Panc1 (cell line): ENCODE measurements at regions of chr19 and their contacts with region 1.

Region 1: GRCh38 chr19:34712395-34713261 is 21.4 kb upstream of the ZNF181 start:
- DNase-seq: peak; percentile 73
- ATAC-seq: peak; percentile 95
- H3K4me3 ChIP-seq: no peak overlapping the region
- H3K27ac ChIP-seq: no peak overlapping the region
- H3K4me1 ChIP-seq: no peaks in the 10 kb centered on the region
- H3K27me3 ChIP-seq: peaks cover 21% of the 10 kb centered on the region
- CTCF ChIP-seq: peak; percentile 82

Region 2: DNA sequence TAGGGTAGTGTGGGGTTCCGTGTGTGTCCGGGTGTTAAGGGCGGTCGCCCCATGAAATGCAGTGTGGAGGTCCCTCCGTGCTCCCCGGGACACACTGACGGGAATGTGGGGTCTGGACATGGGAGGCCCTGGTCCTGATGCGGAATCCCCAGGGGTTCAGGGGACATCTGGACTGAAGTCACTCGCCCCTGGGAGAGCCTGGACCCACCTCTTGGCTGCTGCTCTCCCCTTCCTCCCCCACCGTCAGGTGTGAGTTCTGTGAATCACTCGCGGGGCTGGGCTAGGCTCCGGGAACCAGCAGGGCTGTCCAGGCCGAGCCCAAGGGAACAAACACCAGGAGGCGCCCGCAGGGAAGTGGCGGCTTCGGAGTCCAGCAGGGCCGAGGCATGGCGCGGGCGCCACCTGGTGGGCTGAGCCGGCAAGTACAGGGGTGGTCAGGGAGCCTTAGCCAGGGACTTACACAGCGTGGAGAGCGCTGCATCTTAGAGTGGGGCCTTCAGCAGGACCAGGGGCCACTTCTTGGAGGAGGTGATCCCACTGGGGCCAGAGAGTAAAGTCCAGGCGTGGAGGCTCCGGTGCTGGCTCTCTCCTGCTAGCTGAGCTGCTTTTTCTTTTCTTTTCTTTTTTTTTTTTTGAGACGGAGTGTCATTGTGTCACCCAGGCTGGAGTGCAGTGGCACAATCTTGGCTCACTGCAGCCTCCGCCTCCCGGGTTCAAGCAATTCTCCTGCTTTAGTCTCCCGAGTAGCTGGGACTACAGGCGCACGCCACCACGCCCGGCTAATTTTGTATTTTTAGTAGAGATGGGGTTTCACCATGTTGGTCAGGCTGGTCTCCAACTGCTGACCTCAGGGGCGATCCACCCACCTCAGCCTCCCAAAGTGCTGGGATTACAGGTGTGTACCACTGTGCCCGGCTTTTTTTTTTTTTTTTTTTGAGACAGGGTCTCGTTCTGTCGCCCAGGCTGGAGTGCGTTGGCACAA is 211.0 kb before region 1 on chr19:
- CTCF ChIA-PET with region 1: interaction called, 3 read pairs
- POLR2A ChIA-PET with region 1: no interaction called
- in situ Hi-C with region 1: no loop called
- intact Hi-C with region 1: loop called (anchors 2 kb)
- DNase-seq: peak; percentile 69
- ATAC-seq: peak; percentile 87
- H3K4me3 ChIP-seq: no peak overlapping the region
- H3K27ac ChIP-seq: peak overlapping the region; percentile 37
- H3K4me1 ChIP-seq: peaks cover 22% of the 10 kb centered on the region
- H3K27me3 ChIP-seq: no peaks in the 10 kb centered on the region
- CTCF ChIP-seq: peak; percentile 100

Region 3: DNA sequence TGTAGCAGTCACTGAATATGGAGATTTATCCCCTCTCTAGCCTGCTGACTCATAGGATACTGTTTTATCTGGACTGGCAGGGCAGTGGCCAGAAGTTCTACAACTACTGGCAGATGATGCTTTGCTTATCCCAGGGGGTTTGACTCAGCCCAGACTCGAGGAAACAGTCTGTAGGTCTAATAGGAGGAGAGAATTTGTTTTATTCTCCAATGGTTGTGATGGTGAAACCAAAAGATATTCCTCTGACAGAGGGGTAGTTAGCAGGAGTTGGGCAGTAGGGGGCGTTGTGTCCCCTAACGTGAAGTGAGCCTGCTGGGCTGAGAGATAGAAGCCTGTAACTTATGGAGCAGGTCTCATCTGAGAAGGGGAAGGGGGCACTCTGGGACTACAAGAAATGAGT is 156.1 kb before region 1 on chr19:
- CTCF ChIA-PET with region 1: no interaction called
- POLR2A ChIA-PET with region 1: no interaction called
- in situ Hi-C with region 1: no loop called
- intact Hi-C with region 1: loop called (anchors 2 kb)
- DNase-seq: no peak
- ATAC-seq: peak; percentile 84
- H3K4me3 ChIP-seq: no peak overlapping the region
- H3K27ac ChIP-seq: no peak overlapping the region
- H3K4me1 ChIP-seq: no peaks in the 10 kb centered on the region
- H3K27me3 ChIP-seq: peaks cover 18% of the 10 kb centered on the region
- CTCF ChIP-seq: peak; percentile 86

Region 4: DNA sequence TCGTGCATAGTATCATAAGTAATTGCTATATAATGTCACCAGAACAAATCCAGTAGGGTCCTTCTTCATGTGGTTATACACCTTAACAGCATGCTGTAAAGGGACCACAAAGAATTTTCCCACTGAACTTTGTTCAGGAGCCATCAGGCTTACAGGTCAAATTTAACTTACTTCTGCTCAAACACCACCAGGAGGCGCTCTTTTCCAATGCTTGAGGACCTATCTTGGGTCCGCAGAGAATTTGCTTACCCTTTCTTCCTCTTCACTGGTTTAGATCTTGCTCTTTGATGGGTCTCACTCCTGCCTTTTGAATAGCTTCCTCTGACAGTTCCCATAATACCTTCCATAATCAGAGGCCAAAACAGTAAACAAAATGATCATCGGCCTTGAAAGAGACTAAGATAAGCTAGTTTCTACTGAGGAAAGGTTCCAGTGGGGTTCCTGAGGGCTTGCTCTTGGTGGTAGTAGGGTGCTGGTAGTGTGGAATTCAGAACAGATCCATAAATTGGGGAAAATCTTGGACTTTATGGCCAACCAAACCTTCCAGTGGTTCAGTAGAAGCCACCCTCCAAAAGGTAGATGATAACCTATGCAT is 73.0 kb before region 1 on chr19:
- CTCF ChIA-PET with region 1: interaction called, 10 read pairs
- POLR2A ChIA-PET with region 1: interaction called, 3 read pairs
- in situ Hi-C with region 1: no loop called
- intact Hi-C with region 1: loop called (anchors 1 kb)
- DNase-seq: peak; percentile 43
- ATAC-seq: peak; percentile 92
- H3K4me3 ChIP-seq: no peak overlapping the region
- H3K27ac ChIP-seq: no peak overlapping the region
- H3K4me1 ChIP-seq: no peaks in the 10 kb centered on the region
- H3K27me3 ChIP-seq: no peaks in the 10 kb centered on the region
- CTCF ChIP-seq: peak; percentile 92

Region 5: GRCh38 chr19:34675250-34675649 is 37.4 kb before region 1 on chr19:
- CTCF ChIA-PET with region 1: no interaction called
- POLR2A ChIA-PET with region 1: interaction called, 11 read pairs
- in situ Hi-C with region 1: no loop called
- intact Hi-C with region 1: no loop called
- DNase-seq: no peak
- ATAC-seq: no peak
- H3K4me3 ChIP-seq: no peak overlapping the region
- H3K27ac ChIP-seq: no peak overlapping the region
- H3K4me1 ChIP-seq: peaks cover 7% of the 10 kb centered on the region; the same call in 1 of the 2 replicates
- H3K27me3 ChIP-seq: no peaks in the 10 kb centered on the region
- CTCF ChIP-seq: no peak

Region 6: GRCh38 chr19:34772697-34773554 is 60.3 kb after region 1 on chr19 and contains the start of gene ZNF599:
- CTCF ChIA-PET with region 1: no interaction called
- POLR2A ChIA-PET with region 1: no interaction called
- in situ Hi-C with region 1: no loop called
- intact Hi-C with region 1: no loop called
- DNase-seq: peak; percentile 70
- ATAC-seq: peak; percentile 100
- H3K4me3 ChIP-seq: peak within 1 kb of the TSS; percentile 91 to 95
- H3K27ac ChIP-seq: peak within 1 kb of the TSS; percentile 88
- H3K4me1 ChIP-seq: peaks cover 6% of the 10 kb centered on the region; the same call in 1 of the 2 replicates
- H3K27me3 ChIP-seq: no peaks in the 10 kb centered on the region
- CTCF ChIP-seq: no peak
- total RNA-seq, gene ZNF599: 8.2 TPM